Cardiac septum (tissue), 1 donor: ENCODE measurements at regions of chr1 and their contacts with region 1.

Region 1: GRCh38 chr1:203326830-203327683 is 21.7 kb downstream of the BTG2 start:
- DNase-seq: peak; percentile 98

Region 2: GRCh38 chr1:203306089-203306966 is 20.7 kb before region 1 on chr1:
- intact Hi-C with region 1: loop called (anchors 1 kb)
- DNase-seq: peak; percentile 93

Region 3: GRCh38 chr1:203316626-203317093 is 10.4 kb before region 1 on chr1:
- intact Hi-C with region 1: no loop called
- DNase-seq: no peak